Prostate gland (tissue), 2 donors: ENCODE measurements at regions of chr5 and their contacts with region 1.

Region 1: DNA sequence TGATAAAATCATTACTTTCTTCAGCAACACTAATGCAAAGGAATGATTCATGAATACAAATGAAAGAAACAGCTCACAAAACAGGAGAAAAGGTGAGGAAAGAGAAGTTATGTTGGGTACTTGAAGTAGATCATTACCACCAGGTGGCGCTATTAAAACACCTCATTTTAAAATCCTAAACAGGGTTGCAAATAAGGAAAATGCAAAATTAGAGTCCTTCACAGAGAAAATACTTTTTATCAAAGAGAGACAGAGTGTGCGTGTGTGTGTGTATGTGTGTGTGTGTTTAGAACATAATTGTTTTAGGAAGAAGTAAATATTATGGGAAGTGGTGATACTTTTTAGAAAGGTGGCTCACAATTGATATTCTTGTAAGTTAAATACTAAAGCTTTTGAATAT is 49.5 kb upstream of the CD180 start:
- DNase-seq: peak; percentile 73
- H3K4me3 ChIP-seq: no peak overlapping the region
- H3K27ac ChIP-seq: peak overlapping the region; percentile 32 to 47
- H3K4me1 ChIP-seq: peaks cover 3% of the 10 kb centered on the region
- H3K27me3 ChIP-seq: no peaks in the 10 kb centered on the region
- CTCF ChIP-seq: peak; percentile 71 to 96 (median 88)
- POLR2A ChIP-seq: no peak

Region 2: GRCh38 chr5:66796305-66797292 is 449.5 kb before region 1 on chr5:
- intact Hi-C with region 1: no loop called
- DNase-seq: no peak
- H3K4me3 ChIP-seq: no peak overlapping the region
- H3K27ac ChIP-seq: no peak overlapping the region
- H3K4me1 ChIP-seq: no peaks in the 10 kb centered on the region
- H3K27me3 ChIP-seq: no peaks in the 10 kb centered on the region
- CTCF ChIP-seq: no peak
- POLR2A ChIP-seq: no peak

Region 3: DNA sequence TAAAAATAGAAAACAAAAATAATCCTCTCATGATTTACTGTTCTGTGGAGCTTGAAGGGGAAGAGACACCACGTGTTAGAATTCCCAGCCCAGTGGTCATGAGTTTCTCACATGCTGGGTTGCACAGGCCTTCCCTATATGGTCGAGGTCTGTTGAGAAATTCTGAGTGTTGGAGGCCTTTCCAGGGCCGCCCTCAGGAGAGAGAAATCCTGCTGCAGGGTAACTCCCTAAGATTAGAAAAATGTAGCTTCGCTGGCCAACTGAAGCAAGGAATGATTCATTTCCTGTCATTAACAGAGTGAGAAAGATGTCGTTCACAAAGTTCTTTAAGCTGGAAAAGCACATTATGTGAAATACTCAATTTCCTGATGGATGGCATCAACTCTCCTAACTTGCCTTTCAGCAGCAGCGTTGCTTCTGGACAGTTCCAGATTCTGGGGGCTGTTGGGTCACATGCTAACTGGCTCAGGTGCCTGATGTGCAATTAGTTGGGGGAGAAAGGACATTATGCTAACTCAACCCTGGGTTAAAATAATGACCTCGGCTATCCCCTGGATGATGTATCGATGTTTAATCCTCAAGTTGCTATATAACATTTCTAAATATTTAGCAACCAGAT is 55.3 kb after region 1 on chr5:
- intact Hi-C with region 1: loop called (anchors 5 kb)
- DNase-seq: no peak
- H3K4me3 ChIP-seq: no peak overlapping the region
- H3K27ac ChIP-seq: no peak overlapping the region
- H3K4me1 ChIP-seq: no peaks in the 10 kb centered on the region
- H3K27me3 ChIP-seq: no peaks in the 10 kb centered on the region
- CTCF ChIP-seq: no peak
- POLR2A ChIP-seq: no peak

Region 4: DNA sequence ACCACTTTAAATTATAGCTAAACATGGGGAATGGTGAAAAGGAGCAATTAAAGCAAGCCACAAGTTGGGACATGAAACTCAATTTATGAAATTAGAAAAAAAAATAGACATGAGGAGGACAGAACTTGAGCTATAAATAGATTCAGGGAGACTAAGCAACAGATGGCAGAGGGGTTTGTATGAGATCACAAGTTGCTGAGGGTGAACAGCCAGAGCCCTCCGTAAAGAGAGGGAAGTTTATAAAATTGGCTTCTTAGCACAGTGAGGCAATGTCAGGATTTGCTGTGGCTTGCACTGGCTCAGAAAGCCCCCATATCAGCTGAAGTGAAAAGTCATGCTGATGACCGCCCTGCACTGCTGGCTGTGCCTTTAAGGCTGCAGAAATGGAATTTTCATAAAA is 393.9 kb after region 1 on chr5:
- intact Hi-C with region 1: loop called (anchors 5 kb)
- DNase-seq: no peak
- H3K4me3 ChIP-seq: no peak overlapping the region
- H3K27ac ChIP-seq: no peak overlapping the region
- H3K4me1 ChIP-seq: peaks cover 7% of the 10 kb centered on the region
- H3K27me3 ChIP-seq: no peaks in the 10 kb centered on the region
- CTCF ChIP-seq: no peak
- POLR2A ChIP-seq: no peak

Region 5: DNA sequence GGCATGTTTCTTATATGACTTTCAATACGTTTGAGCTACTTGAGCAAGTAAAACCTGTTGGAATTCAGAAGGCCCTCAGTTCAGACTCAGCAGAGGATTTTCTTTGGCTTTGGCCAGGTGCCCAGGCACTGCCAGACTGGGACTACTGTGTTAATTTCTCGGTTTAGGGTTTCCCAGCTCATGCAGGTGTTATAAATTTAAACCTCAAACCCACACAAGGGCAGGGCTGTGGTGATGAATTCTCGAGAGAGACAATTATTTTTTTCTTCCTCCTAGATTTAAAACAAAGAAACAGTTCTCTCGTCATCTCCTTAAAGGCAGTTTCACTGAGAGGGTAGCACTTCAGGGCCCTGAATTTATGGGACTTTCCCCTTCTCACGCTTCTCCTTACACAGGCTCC is 563.5 kb after region 1 on chr5:
- intact Hi-C with region 1: loop called (anchors 10 kb)
- DNase-seq: no peak
- H3K4me3 ChIP-seq: no peak overlapping the region
- H3K27ac ChIP-seq: no peak overlapping the region
- H3K4me1 ChIP-seq: no peaks in the 10 kb centered on the region
- H3K27me3 ChIP-seq: no peaks in the 10 kb centered on the region
- CTCF ChIP-seq: no peak
- POLR2A ChIP-seq: no peak

Region 6: DNA sequence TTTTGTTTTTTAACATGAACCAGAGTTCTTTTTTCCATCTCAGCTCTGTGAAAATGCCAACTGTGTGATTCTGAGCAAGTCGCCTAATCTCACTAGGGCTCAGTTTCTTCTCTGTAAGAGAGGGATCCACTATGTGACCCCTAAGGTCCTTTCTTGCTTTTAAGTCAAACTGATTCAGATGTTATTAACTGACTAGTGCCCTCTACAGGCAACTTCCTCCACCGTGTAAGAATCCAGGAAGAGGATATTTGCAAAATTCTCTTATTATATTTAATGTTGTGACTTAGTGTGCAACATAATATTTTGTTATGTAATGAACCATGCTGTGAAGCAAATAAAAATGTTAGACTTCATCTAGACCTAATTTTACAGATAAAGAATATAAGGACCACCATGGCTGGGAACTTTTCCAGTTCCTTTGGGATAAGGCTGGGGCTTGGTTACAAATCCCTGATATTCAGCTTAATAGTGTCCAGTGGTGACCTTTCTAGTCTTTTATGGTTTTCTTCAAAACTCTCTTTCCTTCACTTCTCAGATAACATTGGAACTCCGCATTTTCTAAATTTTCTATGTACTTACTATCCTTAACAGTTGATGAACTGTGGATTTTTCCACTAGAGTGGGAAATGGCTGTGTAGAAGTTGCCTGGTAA is 1214.2 kb after region 1 on chr5:
- intact Hi-C with region 1: loop called (anchors 10 kb)
- DNase-seq: peak; percentile 7
- H3K4me3 ChIP-seq: no peak overlapping the region
- H3K27ac ChIP-seq: no peak overlapping the region
- H3K4me1 ChIP-seq: no peaks in the 10 kb centered on the region
- H3K27me3 ChIP-seq: no peaks in the 10 kb centered on the region
- CTCF ChIP-seq: peak; percentile 44 to 54 (median 46)
- POLR2A ChIP-seq: no peak